ENCODE measurements at regions of chr2 and their contacts with region 1.

Region 1: DNA sequence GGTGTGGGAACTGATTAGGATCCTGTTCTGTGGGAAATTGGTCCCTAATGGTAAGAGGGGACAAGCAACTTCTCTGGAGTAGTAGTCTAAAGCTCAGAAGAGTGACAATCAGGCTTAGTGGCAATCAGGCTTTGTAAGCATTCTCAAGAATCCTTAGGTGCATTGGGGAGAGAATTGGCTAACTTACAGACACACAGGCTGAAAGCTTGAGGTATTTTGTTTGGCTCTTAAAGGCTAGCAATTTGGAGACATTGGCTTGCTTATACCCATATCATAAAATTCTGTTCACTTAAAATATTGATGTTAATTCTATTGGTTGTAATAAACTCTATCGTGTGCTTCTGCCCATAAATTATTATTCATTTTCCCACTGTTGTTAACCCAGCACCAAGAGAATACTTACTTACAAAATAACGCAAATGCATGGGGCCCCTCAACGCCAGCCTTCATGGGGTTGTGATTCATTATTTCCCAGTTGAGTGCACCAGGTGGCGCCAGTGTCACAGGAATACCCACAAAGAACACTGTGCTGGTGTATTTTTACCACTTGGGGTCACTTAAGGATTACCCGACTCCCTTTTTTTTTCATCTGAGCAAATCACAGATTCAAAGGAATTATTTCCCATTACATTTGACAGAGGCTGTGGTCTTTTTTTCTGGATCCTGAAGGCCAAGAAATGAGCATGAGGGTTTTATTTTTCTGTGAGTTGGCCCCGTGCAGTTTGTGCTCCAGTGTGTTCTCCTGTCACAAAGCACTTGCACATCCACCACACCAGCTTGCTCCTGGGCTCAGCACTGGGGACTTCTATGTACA is 45.5 kb downstream of the DDX1 start:
- DNase-seq: peak; percentile 68
- ATAC-seq: peak; percentile 88
- H3K4me3 ChIP-seq: no peak overlapping the region
- H3K27ac ChIP-seq: no peak overlapping the region
- H3K4me1 ChIP-seq: peaks cover 2% of the 10 kb centered on the region; the same call in 1 of the 2 replicates
- H3K27me3 ChIP-seq: no peaks in the 10 kb centered on the region
- CTCF ChIP-seq: peak; percentile 97
- POLR2A ChIP-seq: 0 out of 2 replicates have a peak, but pooled peaks have one; percentile 20
- RAD21 ChIP-seq: peak; percentile 94

Region 2: GRCh38 chr2:15939854-15940660 is 302.9 kb after region 1 on chr2 and contains the start of gene MYCN:
- CTCF ChIA-PET with region 1: no interaction called
- POLR2A ChIA-PET with region 1: no interaction called
- dilution Hi-C with region 1: no loop called
- in situ Hi-C with region 1: no loop called
- intact Hi-C with region 1: loop called (anchors 1 kb)
- DNase-seq: no peak
- ATAC-seq: peak; percentile 44
- H3K4me3 ChIP-seq: no peak within 1 kb of the TSS
- H3K27ac ChIP-seq: no peak within 1 kb of the TSS
- H3K4me1 ChIP-seq: no peaks in the 10 kb centered on the region
- H3K27me3 ChIP-seq: peaks cover 33% of the 10 kb centered on the region; the same call in 1 of the 2 replicates
- CTCF ChIP-seq: peak; percentile 45
- POLR2A ChIP-seq: no peak
- RAD21 ChIP-seq: peak; percentile 37; the same call in 1 of the 2 replicates
- total RNA-seq, gene MYCN: not detected in 2 replicates

Region 3: DNA sequence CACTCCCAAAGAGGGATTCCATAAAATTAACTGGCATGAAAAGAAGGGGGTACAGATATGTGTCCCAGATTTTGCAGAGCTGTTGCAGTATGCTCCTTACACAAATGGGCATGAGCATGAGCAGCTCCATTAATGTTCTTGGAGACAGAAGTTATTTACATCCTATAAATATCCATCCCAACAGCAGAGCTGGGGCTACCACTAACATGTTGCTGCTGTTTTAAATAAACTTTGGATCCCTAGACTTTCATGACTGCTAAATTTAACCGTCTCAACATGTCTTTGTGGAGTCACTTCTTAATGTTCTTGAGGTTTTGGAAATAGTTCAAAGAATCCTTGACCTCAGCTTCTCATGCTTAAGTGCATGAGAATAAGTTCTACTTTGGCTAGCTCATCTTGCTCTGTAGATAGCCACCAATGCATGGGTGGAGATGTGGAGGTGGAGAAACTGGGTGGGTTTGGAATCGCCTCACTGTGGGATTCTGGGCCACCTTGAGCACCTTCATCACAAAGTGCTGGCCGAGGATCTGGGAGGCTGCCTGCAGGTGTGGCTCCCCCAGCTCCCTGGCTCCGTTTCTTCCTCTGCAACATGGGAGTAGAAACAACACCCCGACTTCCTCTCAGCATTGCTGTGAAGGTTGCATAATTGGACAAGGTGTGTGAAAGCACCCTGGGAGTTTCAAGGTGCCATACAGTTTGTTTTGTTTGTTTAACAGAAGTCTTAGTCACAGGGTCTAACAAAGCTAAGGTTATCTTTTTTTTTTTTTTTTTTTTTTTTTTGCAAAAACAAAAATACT is 610.3 kb after region 1 on chr2:
- CTCF ChIA-PET with region 1: no interaction called
- POLR2A ChIA-PET with region 1: no interaction called
- dilution Hi-C with region 1: no loop called
- in situ Hi-C with region 1: no loop called
- intact Hi-C with region 1: no loop called
- DNase-seq: no peak
- ATAC-seq: no peak
- H3K4me3 ChIP-seq: no peak overlapping the region
- H3K27ac ChIP-seq: no peak overlapping the region
- H3K4me1 ChIP-seq: no peaks in the 10 kb centered on the region
- H3K27me3 ChIP-seq: no peaks in the 10 kb centered on the region
- CTCF ChIP-seq: no peak
- POLR2A ChIP-seq: no peak
- RAD21 ChIP-seq: no peak

Region 4: DNA sequence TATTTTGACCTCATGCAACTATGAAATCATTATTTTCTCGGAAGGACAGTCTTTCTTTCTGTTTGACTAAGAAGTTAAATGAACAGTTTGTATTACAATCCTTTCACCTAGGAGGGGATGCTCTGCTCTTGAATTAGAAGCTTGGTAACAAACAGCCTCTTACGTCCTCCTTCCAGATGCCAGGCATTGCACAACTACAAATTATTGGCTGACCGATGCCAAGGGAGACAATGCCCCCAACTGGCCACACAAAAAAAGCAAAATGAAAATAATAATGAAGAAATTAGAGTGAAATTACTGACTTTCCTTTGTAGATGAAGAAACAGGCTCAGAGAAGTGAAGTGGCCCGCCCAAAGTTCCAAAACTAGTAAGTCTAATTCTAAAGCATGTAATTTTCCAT is 850.5 kb after region 1 on chr2:
- CTCF ChIA-PET with region 1: interaction called, 3 read pairs
- POLR2A ChIA-PET with region 1: no interaction called
- dilution Hi-C with region 1: no loop called
- in situ Hi-C with region 1: no loop called
- intact Hi-C with region 1: loop called (anchors 5 kb)
- DNase-seq: peak; percentile 13
- ATAC-seq: no peak
- H3K4me3 ChIP-seq: no peak overlapping the region
- H3K27ac ChIP-seq: no peak overlapping the region
- H3K4me1 ChIP-seq: no peaks in the 10 kb centered on the region
- H3K27me3 ChIP-seq: no peaks in the 10 kb centered on the region
- CTCF ChIP-seq: peak; percentile 26; the same call in 1 of the 2 replicates
- POLR2A ChIP-seq: no peak
- RAD21 ChIP-seq: peak; percentile 25; the same call in 1 of the 2 replicates

Region 5: GRCh38 chr2:16507655-16508489 is 870.7 kb after region 1 on chr2:
- CTCF ChIA-PET with region 1: no interaction called
- POLR2A ChIA-PET with region 1: no interaction called
- dilution Hi-C with region 1: no loop called
- in situ Hi-C with region 1: no loop called
- intact Hi-C with region 1: loop called (anchors 1 kb)
- DNase-seq: no peak
- ATAC-seq: peak; percentile 97
- H3K4me3 ChIP-seq: no peak overlapping the region
- H3K27ac ChIP-seq: no peak overlapping the region
- H3K4me1 ChIP-seq: no peaks in the 10 kb centered on the region
- H3K27me3 ChIP-seq: peaks cover 12% of the 10 kb centered on the region; the same call in 1 of the 2 replicates
- CTCF ChIP-seq: peak; percentile 37
- POLR2A ChIP-seq: no peak
- RAD21 ChIP-seq: peak; percentile 51

Region 6: DNA sequence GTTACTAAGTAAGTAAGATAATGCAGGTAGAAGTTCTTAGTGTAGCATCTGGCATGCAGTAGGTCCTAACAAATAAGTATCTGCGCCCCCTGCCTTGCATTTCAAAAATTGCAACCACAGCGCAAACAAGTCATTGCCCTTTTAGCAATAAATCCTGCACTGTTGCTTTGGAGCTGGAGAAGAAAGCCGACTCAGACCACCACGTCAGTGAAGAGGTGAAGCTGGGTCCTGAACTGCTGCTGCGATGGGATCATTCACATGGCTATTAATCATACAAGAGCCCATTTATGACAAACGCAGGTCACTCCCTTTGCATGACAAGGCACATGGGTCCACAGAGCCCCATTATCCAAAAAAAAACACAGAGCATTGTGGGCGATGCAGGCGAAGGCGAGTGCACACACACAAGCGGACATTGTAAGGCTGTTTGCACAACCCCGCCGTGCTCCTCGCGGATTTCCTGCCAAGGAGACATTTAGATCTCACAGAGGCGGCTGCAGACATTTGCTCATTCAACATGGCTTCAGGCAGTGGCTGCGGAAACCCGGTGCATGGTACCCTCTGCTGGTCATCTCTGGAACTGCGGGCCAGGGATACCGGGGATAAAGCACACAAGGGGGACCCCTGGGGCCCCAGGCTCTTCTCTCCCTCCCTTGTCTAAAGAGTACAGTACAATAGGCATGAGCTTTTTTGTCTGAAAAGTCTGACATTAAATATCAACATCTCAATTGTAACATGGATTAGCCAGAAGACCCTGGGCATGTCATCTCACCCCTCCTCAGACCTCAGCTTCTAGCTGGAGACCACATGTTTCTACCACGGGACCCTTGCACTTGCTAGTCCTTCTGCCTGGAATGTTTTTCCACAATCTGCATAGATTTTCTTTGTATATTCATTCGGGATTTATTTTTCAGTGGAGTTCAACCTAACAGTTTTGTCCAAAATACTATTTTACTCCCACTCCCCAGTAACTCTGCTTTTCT is 971.8 kb after region 1 on chr2:
- CTCF ChIA-PET with region 1: interaction called, 6 read pairs
- POLR2A ChIA-PET with region 1: no interaction called
- dilution Hi-C with region 1: no loop called
- in situ Hi-C with region 1: loop called (anchors 5 kb)
- intact Hi-C with region 1: loop called (anchors 1 kb)
- DNase-seq: peak; percentile 68
- ATAC-seq: peak; percentile 96
- H3K4me3 ChIP-seq: peak overlapping the region; percentile 20
- H3K27ac ChIP-seq: no peak overlapping the region
- H3K4me1 ChIP-seq: no peaks in the 10 kb centered on the region; the same call in 1 of the 2 replicates
- H3K27me3 ChIP-seq: no peaks in the 10 kb centered on the region
- CTCF ChIP-seq: peak; percentile 92
- POLR2A ChIP-seq: no peak
- RAD21 ChIP-seq: peak; percentile 74

Measured in IMR-90 (cell line).